MCF 10A (cell line): ENCODE measurements at regions of chr1 and their contacts with region 1.

Region 1: DNA sequence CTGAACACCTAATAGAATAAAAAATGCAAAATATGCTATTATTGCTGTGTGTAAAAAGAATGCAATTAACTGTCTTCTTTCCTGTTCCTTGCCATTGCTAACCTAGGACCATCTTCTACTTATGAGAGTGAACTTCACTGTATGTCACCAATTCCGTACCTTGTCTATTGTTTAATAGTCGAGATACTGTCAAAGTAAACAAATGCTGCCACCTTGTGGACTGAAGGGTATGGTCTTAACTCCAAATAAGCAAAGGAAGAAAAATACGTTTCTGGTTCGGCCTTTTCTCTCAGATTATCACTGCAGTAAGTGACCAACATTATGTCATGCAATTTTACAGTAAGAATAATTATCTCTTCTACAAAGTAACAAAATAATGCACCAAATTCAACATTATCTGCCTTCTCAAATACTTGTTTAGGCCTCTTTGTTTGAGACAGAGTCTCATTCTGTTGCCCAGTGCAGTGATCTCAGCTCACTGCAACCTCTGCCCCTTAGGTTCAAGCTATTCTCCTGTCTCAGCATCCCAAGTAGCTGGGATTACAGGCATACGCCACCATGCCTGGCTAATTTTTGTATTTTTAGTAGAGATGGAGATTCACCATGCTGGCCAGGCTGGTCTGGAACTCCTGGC is 133.4 kb downstream of the COP1 start:
- DNase-seq: peak; percentile 85
- H3K4me3 Mint-ChIP-seq: no peak overlapping the region
- H3K27ac Mint-ChIP-seq: no peak overlapping the region
- H3K4me1 Mint-ChIP-seq: peaks cover 6% of the 10 kb centered on the region
- H3K27me3 Mint-ChIP-seq: no peaks in the 10 kb centered on the region
- CTCF ChIP-seq: peak; percentile 74

Region 2: GRCh38 chr1:175757381-175758015 is 316.1 kb before region 1 on chr1:
- CTCF ChIA-PET with region 1: no interaction called
- POLR2A ChIA-PET with region 1: no interaction called
- intact Hi-C with region 1: loop called (anchors 5 kb)
- DNase-seq: peak; percentile 64
- H3K4me3 Mint-ChIP-seq: no peak overlapping the region
- H3K27ac Mint-ChIP-seq: no peak overlapping the region
- H3K4me1 Mint-ChIP-seq: no peaks in the 10 kb centered on the region
- H3K27me3 Mint-ChIP-seq: peaks cover 40% of the 10 kb centered on the region
- CTCF ChIP-seq: peak; percentile 93

Region 3: DNA sequence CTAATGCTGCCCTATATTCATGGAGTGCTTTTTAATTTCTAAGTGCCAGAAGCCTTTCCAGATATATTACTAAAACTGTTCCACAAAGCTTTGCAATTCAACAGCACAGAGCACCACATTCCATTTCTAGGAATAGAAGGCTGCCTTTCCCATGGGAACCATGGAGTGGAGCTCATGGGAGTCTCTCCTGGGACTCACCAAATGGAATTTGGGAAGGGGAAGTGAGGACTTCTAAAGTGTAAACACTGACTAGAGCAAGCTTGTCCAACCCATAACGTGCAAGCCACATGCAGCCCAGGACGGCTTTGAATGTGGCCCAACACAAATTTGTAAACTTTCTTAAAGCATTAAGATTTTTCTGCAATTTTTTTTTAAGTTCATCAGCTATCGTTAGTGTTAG is 139.8 kb before region 1 on chr1:
- CTCF ChIA-PET with region 1: no interaction called
- POLR2A ChIA-PET with region 1: no interaction called
- intact Hi-C with region 1: loop called (anchors 10 kb)
- DNase-seq: peak; percentile 8
- H3K4me3 Mint-ChIP-seq: no peak overlapping the region
- H3K27ac Mint-ChIP-seq: no peak overlapping the region
- H3K4me1 Mint-ChIP-seq: no peaks in the 10 kb centered on the region
- H3K27me3 Mint-ChIP-seq: no peaks in the 10 kb centered on the region
- CTCF ChIP-seq: no peak

Region 4: DNA sequence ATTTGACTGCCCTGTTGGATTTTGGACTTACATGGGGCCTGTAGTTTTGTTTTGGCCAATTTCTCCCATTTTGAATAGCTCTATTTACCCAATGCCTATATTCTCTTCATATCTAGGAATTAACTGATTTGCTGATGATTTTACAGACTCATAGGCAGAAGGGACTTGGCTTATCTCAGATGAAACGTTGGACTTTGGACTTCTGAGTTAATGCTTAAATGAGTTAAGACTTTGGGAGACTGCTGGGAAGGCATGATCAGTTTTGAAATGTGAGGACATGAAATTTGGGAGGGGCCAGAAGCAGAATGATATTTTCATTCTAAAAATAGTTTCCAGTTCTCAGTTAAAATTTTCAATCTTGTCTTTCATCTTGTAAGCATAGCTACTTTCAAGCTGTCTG is 88.8 kb before region 1 on chr1:
- CTCF ChIA-PET with region 1: no interaction called
- POLR2A ChIA-PET with region 1: no interaction called
- intact Hi-C with region 1: no loop called
- DNase-seq: no peak
- H3K4me3 Mint-ChIP-seq: no peak overlapping the region
- H3K27ac Mint-ChIP-seq: no peak overlapping the region
- H3K4me1 Mint-ChIP-seq: no peaks in the 10 kb centered on the region
- H3K27me3 Mint-ChIP-seq: no peaks in the 10 kb centered on the region
- CTCF ChIP-seq: no peak

Region 5: GRCh38 chr1:176009951-176010350 is 63.7 kb before region 1 on chr1:
- CTCF ChIA-PET with region 1: no interaction called
- POLR2A ChIA-PET with region 1: no interaction called
- intact Hi-C with region 1: no loop called
- DNase-seq: no peak
- H3K4me3 Mint-ChIP-seq: no peak overlapping the region
- H3K27ac Mint-ChIP-seq: no peak overlapping the region
- H3K4me1 Mint-ChIP-seq: no peaks in the 10 kb centered on the region
- H3K27me3 Mint-ChIP-seq: no peaks in the 10 kb centered on the region
- CTCF ChIP-seq: no peak